Psoas muscle (tissue), 8 donors: ENCODE measurements at regions of chr7 and their contacts with region 1.

Region 1: GRCh38 chr7:33895025-33895804 is 10.1 kb upstream of the BMPER start:
- DNase-seq: peak; percentile 85 to 91
- ATAC-seq: peak; percentile 94 to 100 (median 96)
- H3K4me3 ChIP-seq: no peak overlapping the region
- H3K27ac ChIP-seq: no peak overlapping the region
- H3K4me1 ChIP-seq: no peaks in the 10 kb centered on the region
- H3K27me3 ChIP-seq: no peaks in the 10 kb centered on the region
- CTCF ChIP-seq: peak; percentile 85

Region 2: GRCh38 chr7:33243319-33243881 is 651.8 kb before region 1 on chr7:
- intact Hi-C with region 1: loop called in 1 of 2 experiments (anchors 10 kb)
- DNase-seq: no peak
- ATAC-seq: peak in 3 of 4 donors; percentile 42 to 72 (median 43)
- H3K4me3 ChIP-seq: no peak overlapping the region
- H3K27ac ChIP-seq: no peak overlapping the region
- H3K4me1 ChIP-seq: no peaks in the 10 kb centered on the region
- H3K27me3 ChIP-seq: no peaks in the 10 kb centered on the region
- CTCF ChIP-seq: peak; percentile 64

Region 3: DNA sequence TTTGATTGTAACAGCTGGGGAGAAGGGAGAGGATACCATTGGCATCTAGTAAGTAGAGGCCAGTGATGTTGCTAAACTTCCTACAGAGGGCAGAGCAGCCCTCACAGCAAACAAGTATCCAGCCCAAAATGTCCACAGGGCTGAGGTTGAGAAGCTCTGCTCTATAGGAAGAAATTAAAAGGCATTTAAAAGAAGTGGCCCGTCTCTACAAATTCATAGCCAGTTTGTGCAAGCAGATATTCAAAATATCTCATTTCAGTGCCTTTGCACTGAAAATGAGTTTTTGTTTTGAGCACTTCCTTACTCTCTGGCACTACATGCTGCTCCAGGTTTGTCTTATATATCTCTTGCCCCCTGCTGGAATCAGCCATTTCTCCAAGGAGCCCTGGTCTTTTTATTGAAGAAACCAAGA is 435.9 kb before region 1 on chr7:
- intact Hi-C with region 1: loop called (anchors 10 kb)
- DNase-seq: no peak
- ATAC-seq: peak; percentile 68 to 94 (median 80)
- H3K4me3 ChIP-seq: no peak overlapping the region
- H3K27ac ChIP-seq: no peak overlapping the region
- H3K4me1 ChIP-seq: no peaks in the 10 kb centered on the region
- H3K27me3 ChIP-seq: no peaks in the 10 kb centered on the region
- CTCF ChIP-seq: peak; percentile 55

Region 4: DNA sequence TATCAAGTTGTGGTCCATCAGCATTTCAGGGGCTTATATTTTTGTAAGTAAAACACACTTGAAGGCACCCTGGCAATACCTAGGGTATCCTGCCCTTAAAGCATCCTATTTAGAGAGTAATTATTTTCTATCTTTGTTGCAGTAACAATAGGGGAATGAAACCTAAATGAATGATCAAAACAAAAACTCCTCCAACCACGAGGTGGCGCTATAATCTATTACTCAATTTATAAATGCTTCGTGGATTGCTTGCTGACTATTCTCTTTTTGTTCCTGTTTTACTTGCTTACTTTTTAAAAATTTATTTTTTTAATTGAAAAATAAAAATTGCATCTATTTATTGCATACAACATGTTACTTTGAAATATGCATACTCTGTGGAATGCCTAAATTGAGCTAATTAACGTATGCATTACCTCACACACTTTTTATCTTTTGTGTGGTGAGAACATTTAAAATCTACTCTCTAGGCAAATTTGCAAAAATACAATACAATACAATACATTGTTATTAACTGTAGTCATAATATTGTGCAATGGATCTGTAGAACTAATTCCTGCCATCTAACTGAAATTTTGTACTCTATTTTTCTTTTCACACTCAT is 137.6 kb before region 1 on chr7:
- intact Hi-C with region 1: loop called (anchors 2 kb)
- DNase-seq: no peak
- ATAC-seq: peak in 2 of 4 donors; percentile 39 to 60
- H3K4me3 ChIP-seq: no peak overlapping the region
- H3K27ac ChIP-seq: no peak overlapping the region
- H3K4me1 ChIP-seq: peaks cover 15% of the 10 kb centered on the region
- H3K27me3 ChIP-seq: no peaks in the 10 kb centered on the region
- CTCF ChIP-seq: peak; percentile 74

Region 5: GRCh38 chr7:34133983-34134782 is 239.0 kb after region 1 on chr7:
- intact Hi-C with region 1: no loop called
- DNase-seq: peak; percentile 66 to 82
- ATAC-seq: peak; percentile 79 to 89 (median 84)
- H3K4me3 ChIP-seq: no peak overlapping the region
- H3K27ac ChIP-seq: no peak overlapping the region
- H3K4me1 ChIP-seq: peaks cover 15% of the 10 kb centered on the region
- H3K27me3 ChIP-seq: no peaks in the 10 kb centered on the region
- CTCF ChIP-seq: peak; percentile 78